CD8-positive, alpha-beta T cell (primary cell): ENCODE measurements at regions of chr18 and their contacts with region 1.

Region 1: GRCh38 chr18:13629841-13630715 is 96.3 kb downstream of the FAM210A start:
- DNase-seq: peak in 7 of 9 experiments; percentile 28 to 77 (median 62)
- ATAC-seq: peak; percentile 95
- H3K4me3 ChIP-seq: no peak overlapping the region
- H3K4me3 Mint-ChIP-seq: no peak overlapping the region
- H3K27ac ChIP-seq: no peak overlapping the region
- H3K27ac Mint-ChIP-seq: no peak overlapping the region
- H3K4me1 ChIP-seq: peaks cover 4% of the 10 kb centered on the region
- H3K4me1 Mint-ChIP-seq: peaks cover 22% of the 10 kb centered on the region
- H3K27me3 ChIP-seq: no peaks in the 10 kb centered on the region
- H3K27me3 Mint-ChIP-seq: no peaks in the 10 kb centered on the region
- CTCF ChIP-seq: peak; percentile 95

Region 2: DNA sequence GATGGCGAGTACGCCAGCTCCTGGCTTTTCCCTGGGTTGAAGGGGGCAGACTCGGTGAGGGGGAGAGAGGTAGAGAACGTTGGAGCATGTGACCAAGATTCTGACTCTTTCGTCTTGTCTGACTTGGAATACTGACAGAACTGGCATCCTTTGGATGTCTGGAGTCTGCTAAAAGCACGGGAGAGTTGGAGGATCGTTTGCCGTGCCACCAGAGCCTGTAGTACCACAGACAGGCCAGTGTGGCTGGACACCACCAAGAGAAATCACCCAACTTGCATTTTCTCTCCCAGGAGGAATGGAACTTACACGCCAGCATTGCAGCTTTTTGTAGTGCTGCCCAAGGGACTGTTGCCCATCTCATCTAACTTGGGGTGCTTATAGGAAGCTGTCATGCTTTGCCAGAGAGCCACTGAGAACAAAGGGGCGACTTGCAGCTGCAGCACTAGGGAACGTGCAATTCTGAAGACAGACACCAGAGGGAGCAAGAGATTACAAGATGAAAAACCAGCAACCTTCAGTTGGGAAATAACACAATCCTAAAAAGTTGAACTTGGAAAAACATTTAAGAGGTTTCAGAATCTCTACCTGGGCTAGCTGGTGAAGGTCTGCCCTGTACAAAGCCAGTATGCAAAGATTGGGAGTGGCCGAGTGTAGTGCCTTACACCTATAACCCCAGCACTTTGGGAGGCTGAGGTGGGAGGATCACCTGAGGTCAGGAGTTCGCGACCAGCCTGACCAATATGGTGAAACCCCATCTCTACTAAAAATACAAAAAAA is 903.1 kb before region 1 on chr18:
- CTCF ChIA-PET with region 1: no interaction called
- POLR2A ChIA-PET with region 1: no interaction called
- intact Hi-C with region 1: loop called in 1 of 2 experiments (anchors 5 kb)
- DNase-seq: peak; percentile 27 to 77 (median 57)
- ATAC-seq: peak; percentile 89
- H3K4me3 ChIP-seq: no peak overlapping the region
- H3K4me3 Mint-ChIP-seq: no peak overlapping the region
- H3K27ac ChIP-seq: no peak overlapping the region
- H3K27ac Mint-ChIP-seq: peak overlapping the region; percentile 20
- H3K4me1 ChIP-seq: no peaks in the 10 kb centered on the region
- H3K4me1 Mint-ChIP-seq: no peaks in the 10 kb centered on the region
- H3K27me3 ChIP-seq: no peaks in the 10 kb centered on the region
- H3K27me3 Mint-ChIP-seq: no peaks in the 10 kb centered on the region
- CTCF ChIP-seq: peak; percentile 90

Region 3: DNA sequence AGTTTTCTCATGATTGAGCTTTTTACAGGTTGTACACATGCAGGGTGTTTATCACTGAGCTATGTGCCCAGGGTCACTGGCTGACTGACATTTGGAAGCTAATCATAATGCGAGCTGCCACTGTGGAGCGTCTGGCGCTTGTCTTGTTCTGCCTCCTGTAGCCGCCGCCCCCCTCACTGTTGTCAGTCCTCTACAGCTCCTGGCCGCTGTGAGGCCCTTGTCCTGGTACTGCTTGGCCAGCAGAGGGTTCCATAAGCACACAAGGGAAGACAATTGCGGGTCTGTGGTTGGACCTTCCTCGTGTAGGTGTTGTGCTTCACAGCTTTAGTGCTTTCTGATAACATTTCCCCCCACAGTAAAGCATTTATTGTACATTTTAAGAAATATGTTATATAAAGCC is 517.1 kb before region 1 on chr18:
- CTCF ChIA-PET with region 1: no interaction called
- POLR2A ChIA-PET with region 1: no interaction called
- intact Hi-C with region 1: loop called in 1 of 2 experiments (anchors 1 kb)
- DNase-seq: peak in 4 of 9 experiments; percentile 12 to 53 (median 32)
- ATAC-seq: peak; percentile 69
- H3K4me3 ChIP-seq: no peak overlapping the region
- H3K4me3 Mint-ChIP-seq: no peak overlapping the region
- H3K27ac ChIP-seq: no peak overlapping the region
- H3K27ac Mint-ChIP-seq: no peak overlapping the region
- H3K4me1 ChIP-seq: no peaks in the 10 kb centered on the region
- H3K4me1 Mint-ChIP-seq: no peaks in the 10 kb centered on the region
- H3K27me3 ChIP-seq: no peaks in the 10 kb centered on the region
- H3K27me3 Mint-ChIP-seq: no peaks in the 10 kb centered on the region
- CTCF ChIP-seq: no peak

Region 4: GRCh38 chr18:13318731-13319501 is 311.2 kb before region 1 on chr18:
- CTCF ChIA-PET with region 1: no interaction called
- POLR2A ChIA-PET with region 1: interaction called, 3 read pairs
- intact Hi-C with region 1: loop called in 1 of 2 experiments (anchors 10 kb)
- DNase-seq: no peak
- ATAC-seq: no peak
- H3K4me3 ChIP-seq: no peak overlapping the region
- H3K4me3 Mint-ChIP-seq: no peak overlapping the region
- H3K27ac ChIP-seq: no peak overlapping the region
- H3K27ac Mint-ChIP-seq: no peak overlapping the region
- H3K4me1 ChIP-seq: peaks cover 7% of the 10 kb centered on the region
- H3K4me1 Mint-ChIP-seq: peaks cover 8% of the 10 kb centered on the region
- H3K27me3 ChIP-seq: no peaks in the 10 kb centered on the region
- H3K27me3 Mint-ChIP-seq: no peaks in the 10 kb centered on the region
- CTCF ChIP-seq: no peak

Region 5: GRCh38 chr18:13592246-13592645 is 37.8 kb before region 1 on chr18:
- CTCF ChIA-PET with region 1: no interaction called
- POLR2A ChIA-PET with region 1: no interaction called
- intact Hi-C with region 1: no loop called
- DNase-seq: no peak
- ATAC-seq: no peak
- H3K4me3 ChIP-seq: no peak overlapping the region
- H3K4me3 Mint-ChIP-seq: no peak overlapping the region
- H3K27ac ChIP-seq: no peak overlapping the region
- H3K27ac Mint-ChIP-seq: peak overlapping the region; percentile 4
- H3K4me1 ChIP-seq: peaks cover 10% of the 10 kb centered on the region
- H3K4me1 Mint-ChIP-seq: peaks cover 43% of the 10 kb centered on the region
- H3K27me3 ChIP-seq: no peaks in the 10 kb centered on the region
- H3K27me3 Mint-ChIP-seq: no peaks in the 10 kb centered on the region
- CTCF ChIP-seq: no peak

Region 6: DNA sequence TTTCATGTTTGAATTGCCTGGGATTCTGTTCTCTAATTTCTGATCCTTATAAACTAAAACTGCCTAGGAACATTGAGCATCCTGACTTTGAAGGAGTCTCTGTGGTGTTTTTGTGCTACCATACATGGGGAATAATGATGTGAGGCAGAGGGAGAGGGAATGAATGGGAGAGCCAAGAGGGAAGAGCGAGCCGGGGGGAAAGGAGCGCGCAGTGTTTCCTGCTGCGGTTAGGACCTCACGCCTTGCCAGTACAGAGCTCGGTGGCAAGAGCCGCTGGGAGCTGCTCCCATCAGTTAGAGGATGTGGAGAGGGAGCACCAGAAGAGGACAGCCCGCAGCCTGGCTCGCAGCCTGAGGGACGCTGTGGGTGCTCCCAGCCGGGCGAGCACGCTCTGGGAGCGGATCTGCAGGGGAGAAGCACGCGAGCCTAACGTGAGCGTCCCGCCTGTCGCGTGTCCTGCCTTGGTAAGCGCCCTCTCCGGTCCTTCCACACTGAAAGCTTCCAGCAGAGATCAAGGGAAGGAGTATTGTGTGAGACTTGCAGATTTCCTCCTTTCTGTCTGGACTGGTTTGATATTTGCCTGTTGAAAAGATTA is 18.4 kb before region 1 on chr18:
- CTCF ChIA-PET with region 1: interaction called, 13 read pairs
- POLR2A ChIA-PET with region 1: no interaction called
- intact Hi-C with region 1: loop called in 1 of 2 experiments (anchors 1 kb)
- DNase-seq: peak in 2 of 9 experiments; percentile 26 to 36
- ATAC-seq: no peak
- H3K4me3 ChIP-seq: peak overlapping the region; percentile 36 to 55
- H3K4me3 Mint-ChIP-seq: peak overlapping the region; percentile 82
- H3K27ac ChIP-seq: peak overlapping the region; percentile 33 to 53
- H3K27ac Mint-ChIP-seq: peak overlapping the region; percentile 98
- H3K4me1 ChIP-seq: peaks cover 72% of the 10 kb centered on the region
- H3K4me1 Mint-ChIP-seq: peaks cover 83% of the 10 kb centered on the region
- H3K27me3 ChIP-seq: no peaks in the 10 kb centered on the region
- H3K27me3 Mint-ChIP-seq: no peaks in the 10 kb centered on the region
- CTCF ChIP-seq: no peak

Region 7: GRCh38 chr18:13646633-13647032 is 16.6 kb after region 1 on chr18:
- CTCF ChIA-PET with region 1: no interaction called
- POLR2A ChIA-PET with region 1: no interaction called
- intact Hi-C with region 1: no loop called
- DNase-seq: no peak
- ATAC-seq: no peak
- H3K4me3 ChIP-seq: no peak overlapping the region
- H3K4me3 Mint-ChIP-seq: no peak overlapping the region
- H3K27ac ChIP-seq: no peak overlapping the region
- H3K27ac Mint-ChIP-seq: peak overlapping the region; percentile 49
- H3K4me1 ChIP-seq: no peaks in the 10 kb centered on the region
- H3K4me1 Mint-ChIP-seq: no peaks in the 10 kb centered on the region
- H3K27me3 ChIP-seq: no peaks in the 10 kb centered on the region
- H3K27me3 Mint-ChIP-seq: no peaks in the 10 kb centered on the region
- CTCF ChIP-seq: no peak